PC-3 (cell line): ENCODE measurements at regions of chr20 and their contacts with region 1.

Region 1: GRCh38 chr20:36645998-36646397 is at the start of gene SLA2:
- DNase-seq: no peak
- ATAC-seq: no peak
- H3K4me3 ChIP-seq: no peak within 1 kb of the TSS
- H3K27ac ChIP-seq: no peak within 1 kb of the TSS
- H3K4me1 ChIP-seq: peaks cover 12% of the 10 kb centered on the region
- H3K27me3 ChIP-seq: no peaks in the 10 kb centered on the region
- CTCF ChIP-seq: no peak
- total RNA-seq, gene SLA2: 0.23 and 0.51 TPM in 2 replicates

Region 2: DNA sequence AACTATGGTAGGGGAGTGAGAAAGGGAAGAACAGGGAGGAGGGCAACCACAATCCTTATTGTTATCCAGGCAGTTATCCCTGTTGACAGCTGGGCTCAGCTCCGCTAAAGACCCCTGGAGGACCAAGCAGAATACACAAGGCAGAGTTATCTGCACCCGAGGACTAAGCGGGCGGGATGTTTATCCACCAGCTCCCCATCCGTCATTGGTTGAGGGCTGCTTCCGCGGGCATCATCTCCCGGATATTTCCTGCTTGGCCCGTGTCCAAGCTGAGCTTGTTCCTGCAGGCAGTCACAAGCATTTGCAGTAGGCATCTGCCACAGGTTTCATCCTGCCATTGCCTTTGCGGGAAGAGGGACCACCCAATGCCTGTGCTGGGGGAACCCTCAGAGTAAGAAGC is 237.8 kb before region 1 on chr20:
- CTCF ChIA-PET with region 1: no interaction called
- POLR2A ChIA-PET with region 1: no interaction called
- intact Hi-C with region 1: no loop called
- DNase-seq: peak; percentile 74
- ATAC-seq: no peak; the same call in 1 of the 2 replicates
- H3K4me3 ChIP-seq: no peak overlapping the region
- H3K27ac ChIP-seq: no peak overlapping the region
- H3K4me1 ChIP-seq: no peaks in the 10 kb centered on the region
- H3K27me3 ChIP-seq: peaks cover 8% of the 10 kb centered on the region; the same call in 1 of the 2 replicates
- CTCF ChIP-seq: no peak

Region 3: GRCh38 chr20:36728986-36729385 is 83.0 kb after region 1 on chr20:
- CTCF ChIA-PET with region 1: interaction called, 11 read pairs
- POLR2A ChIA-PET with region 1: no interaction called
- intact Hi-C with region 1: no loop called
- DNase-seq: peak; percentile 55
- ATAC-seq: peak; percentile 25; the same call in 1 of the 2 replicates
- H3K4me3 ChIP-seq: no peak overlapping the region
- H3K27ac ChIP-seq: no peak overlapping the region
- H3K4me1 ChIP-seq: peaks cover 9% of the 10 kb centered on the region
- H3K27me3 ChIP-seq: no peaks in the 10 kb centered on the region
- CTCF ChIP-seq: peak; percentile 57; the same call in 1 of the 2 replicates

Region 4: DNA sequence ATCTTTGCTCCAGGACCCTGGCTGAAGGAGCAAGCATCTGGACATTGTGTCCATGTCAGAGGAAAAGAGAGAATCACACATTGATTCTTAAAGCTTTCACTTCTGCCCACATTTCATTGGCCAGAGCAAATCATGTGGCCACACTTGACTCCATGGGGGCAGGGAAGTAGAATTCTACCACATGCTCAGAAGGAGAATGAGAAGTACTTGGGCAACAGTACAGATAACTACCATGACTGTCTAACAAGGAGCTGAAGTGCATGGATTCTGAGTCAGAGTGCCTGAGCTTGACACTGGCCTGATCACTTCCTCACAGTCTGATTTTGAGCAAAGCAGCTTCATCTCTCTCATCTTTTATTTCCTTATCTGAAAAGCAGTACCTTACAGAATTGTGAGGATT is 577.1 kb after region 1 on chr20:
- CTCF ChIA-PET with region 1: no interaction called
- POLR2A ChIA-PET with region 1: no interaction called
- intact Hi-C with region 1: no loop called
- DNase-seq: peak; percentile 15
- ATAC-seq: no peak; the same call in 1 of the 2 replicates
- H3K4me3 ChIP-seq: no peak overlapping the region
- H3K27ac ChIP-seq: no peak overlapping the region
- H3K4me1 ChIP-seq: no peaks in the 10 kb centered on the region
- H3K27me3 ChIP-seq: no peaks in the 10 kb centered on the region
- CTCF ChIP-seq: no peak